Posterior cingulate gyrus (tissue), 11 donors: ENCODE measurements at regions of chr7 and their contacts with region 1.

Region 1: DNA sequence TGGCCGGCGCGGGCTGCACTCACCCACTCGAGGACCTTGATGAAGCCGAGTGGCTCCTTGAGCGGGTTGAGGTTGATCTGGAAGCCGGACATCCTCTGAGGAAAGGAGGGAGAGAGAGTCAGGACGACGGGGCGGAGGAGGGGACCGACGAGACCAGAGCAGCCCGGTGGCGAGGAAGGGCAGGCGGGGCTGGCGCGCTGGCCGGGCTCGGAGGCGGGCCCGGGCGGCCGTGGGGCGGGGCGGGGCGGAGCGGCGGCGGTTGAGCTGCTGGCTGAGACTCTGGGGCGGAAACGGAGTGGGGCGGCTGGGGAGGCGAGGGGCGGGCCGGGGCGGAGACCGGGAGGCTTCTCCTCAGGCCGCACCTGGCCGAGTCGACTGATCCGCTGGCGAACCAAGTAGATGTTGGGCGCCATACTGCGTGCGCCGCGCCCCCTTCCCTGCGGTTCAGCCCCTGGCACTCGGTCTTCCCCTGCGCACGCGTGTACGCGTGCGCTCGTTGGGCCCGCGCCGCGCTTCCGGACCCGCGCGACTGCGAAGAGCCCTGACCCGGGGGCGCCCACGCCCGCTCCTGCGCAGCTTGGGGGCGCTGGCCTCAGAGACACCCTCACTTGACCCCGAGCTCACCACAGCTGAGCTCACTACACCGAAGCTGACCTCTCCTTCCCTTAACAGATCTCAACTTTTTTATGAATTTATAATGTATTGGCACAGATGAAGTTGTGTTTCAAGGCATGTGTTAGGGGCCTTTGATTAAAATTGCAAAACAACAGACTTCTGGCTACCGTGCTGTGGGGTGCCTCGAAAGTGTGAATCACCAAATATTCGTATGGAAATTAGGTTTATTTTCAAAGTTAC is at the start of gene SYPL1:
- DNase-seq: peak; percentile 78 to 97 (median 84)

Region 2: GRCh38 chr7:106056513-106057203 is 55.7 kb before region 1 on chr7:
- intact Hi-C with region 1: loop called (anchors 2 kb)
- DNase-seq: peak; percentile 54 to 97 (median 78)

Region 3: DNA sequence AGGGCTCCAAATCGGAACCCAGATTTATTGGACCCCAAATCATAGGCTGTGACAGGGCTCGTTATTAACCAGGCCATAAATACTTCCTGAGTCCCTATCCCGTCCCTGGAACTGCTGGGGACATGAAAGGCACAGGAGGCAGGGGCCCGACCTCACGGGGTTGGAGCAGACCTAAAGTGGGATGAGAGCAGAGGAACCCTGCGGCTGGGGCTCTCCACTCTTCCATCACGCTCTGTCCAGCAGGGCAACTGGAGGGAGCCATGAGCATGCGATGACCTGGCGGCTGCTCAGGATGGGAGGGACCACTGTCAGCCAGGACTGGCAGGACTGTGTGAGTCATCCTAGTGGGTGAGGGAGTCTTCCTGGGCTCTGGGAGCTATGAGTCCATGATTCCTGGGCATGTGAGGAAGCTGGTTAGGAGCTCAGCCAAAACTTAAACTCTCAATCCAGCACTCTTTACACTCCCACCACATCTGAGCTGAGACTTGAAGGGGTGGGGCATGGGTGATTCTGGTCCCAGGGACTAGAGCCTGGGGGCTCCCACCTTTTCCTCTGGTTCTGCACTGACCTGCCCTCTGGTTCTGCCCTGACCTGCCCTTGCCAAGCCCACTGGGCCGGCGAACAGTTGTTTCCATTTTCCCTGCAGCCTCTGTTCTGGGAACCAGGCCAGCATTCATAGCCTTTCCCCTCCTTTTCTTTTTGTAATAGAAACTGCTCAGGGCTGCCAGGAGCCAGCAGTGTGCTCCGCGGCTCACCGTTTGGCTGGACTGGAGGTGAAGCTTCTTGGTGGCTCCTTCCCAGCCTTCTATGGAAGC is 47.4 kb before region 1 on chr7:
- intact Hi-C with region 1: loop called (anchors 2 kb)
- DNase-seq: peak; percentile 58 to 95 (median 74)